Activated B cell treated with CpG ODN at 0.5 μM for 24 hours (primary cell): ENCODE measurements at regions of chrX and their contacts with region 1.

Region 1: DNA sequence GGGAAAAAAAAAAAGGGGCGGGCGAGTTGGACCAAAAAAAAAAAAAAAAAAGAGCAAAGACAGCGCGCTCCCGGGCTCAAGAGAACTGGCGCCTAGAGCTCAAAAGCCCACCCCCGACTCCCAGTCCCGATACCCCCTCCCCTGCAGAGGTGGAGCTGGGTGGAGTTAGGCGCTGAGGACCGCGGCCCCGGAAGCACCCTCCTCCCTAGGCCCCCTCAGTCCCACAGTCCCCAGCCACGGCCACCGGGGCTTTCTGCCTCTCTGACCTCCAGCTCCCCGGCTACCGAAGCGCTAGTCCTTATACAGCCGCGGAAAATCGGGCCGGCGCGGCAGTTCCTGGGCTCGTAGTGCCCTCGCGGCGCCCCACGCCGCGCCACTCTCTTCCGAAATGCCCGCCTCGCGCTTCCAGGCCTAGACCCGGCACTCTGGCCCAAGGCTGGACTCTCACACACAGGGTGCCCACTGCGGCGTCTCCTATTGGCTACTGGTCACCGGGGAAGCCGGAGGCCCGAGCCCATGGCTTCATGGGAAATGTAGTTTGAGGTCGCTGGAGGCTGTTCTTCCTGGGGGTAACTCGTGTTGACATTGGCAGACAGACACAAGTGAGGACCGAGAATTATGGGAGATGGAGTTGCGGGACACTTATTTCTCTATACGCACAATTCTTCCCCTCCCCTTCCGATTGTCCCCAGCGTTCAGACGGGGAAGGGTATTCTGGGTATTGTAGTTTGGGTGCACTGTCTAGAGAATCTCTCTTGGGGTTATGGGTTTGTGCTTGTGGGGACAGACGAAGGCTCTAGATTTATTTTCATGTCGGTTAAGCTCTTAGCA is at the start of gene ENOX2:
- DNase-seq: peak; percentile 60
- ATAC-seq: peak; percentile 94
- H3K4me3 Mint-ChIP-seq: no peak within 1 kb of the TSS
- H3K27ac Mint-ChIP-seq: peak within 1 kb of the TSS; percentile 59
- H3K4me1 Mint-ChIP-seq: peaks cover 12% of the 10 kb centered on the region
- H3K27me3 Mint-ChIP-seq: no peaks in the 10 kb centered on the region
- CTCF ChIP-seq: no peak
- total RNA-seq, gene ENOX2: 15.9 and 16.2 TPM in 2 replicates

Region 2: GRCh38 chrX:129039180-129039579 is 1863.8 kb before region 1 on chrX:
- CTCF ChIA-PET with region 1: no interaction called
- POLR2A ChIA-PET with region 1: no interaction called
- intact Hi-C with region 1: no loop called
- DNase-seq: no peak
- ATAC-seq: no peak
- H3K4me3 Mint-ChIP-seq: no peak overlapping the region
- H3K27ac Mint-ChIP-seq: no peak overlapping the region
- H3K4me1 Mint-ChIP-seq: no peaks in the 10 kb centered on the region
- H3K27me3 Mint-ChIP-seq: no peaks in the 10 kb centered on the region
- CTCF ChIP-seq: no peak

Region 3: GRCh38 chrX:130268500-130269170 is 634.4 kb before region 1 on chrX and contains the start of gene ZNF280C:
- CTCF ChIA-PET with region 1: no interaction called
- POLR2A ChIA-PET with region 1: no interaction called
- intact Hi-C with region 1: loop called (anchors 2 kb)
- DNase-seq: peak; percentile 80
- ATAC-seq: peak; percentile 93
- H3K4me3 Mint-ChIP-seq: peak within 1 kb of the TSS; percentile 86
- H3K27ac Mint-ChIP-seq: peak within 1 kb of the TSS; percentile 82
- H3K4me1 Mint-ChIP-seq: peaks cover 17% of the 10 kb centered on the region
- H3K27me3 Mint-ChIP-seq: no peaks in the 10 kb centered on the region
- CTCF ChIP-seq: no peak
- total RNA-seq, gene ZNF280C: 6.9 and 9.1 TPM in 2 replicates

Region 4: DNA sequence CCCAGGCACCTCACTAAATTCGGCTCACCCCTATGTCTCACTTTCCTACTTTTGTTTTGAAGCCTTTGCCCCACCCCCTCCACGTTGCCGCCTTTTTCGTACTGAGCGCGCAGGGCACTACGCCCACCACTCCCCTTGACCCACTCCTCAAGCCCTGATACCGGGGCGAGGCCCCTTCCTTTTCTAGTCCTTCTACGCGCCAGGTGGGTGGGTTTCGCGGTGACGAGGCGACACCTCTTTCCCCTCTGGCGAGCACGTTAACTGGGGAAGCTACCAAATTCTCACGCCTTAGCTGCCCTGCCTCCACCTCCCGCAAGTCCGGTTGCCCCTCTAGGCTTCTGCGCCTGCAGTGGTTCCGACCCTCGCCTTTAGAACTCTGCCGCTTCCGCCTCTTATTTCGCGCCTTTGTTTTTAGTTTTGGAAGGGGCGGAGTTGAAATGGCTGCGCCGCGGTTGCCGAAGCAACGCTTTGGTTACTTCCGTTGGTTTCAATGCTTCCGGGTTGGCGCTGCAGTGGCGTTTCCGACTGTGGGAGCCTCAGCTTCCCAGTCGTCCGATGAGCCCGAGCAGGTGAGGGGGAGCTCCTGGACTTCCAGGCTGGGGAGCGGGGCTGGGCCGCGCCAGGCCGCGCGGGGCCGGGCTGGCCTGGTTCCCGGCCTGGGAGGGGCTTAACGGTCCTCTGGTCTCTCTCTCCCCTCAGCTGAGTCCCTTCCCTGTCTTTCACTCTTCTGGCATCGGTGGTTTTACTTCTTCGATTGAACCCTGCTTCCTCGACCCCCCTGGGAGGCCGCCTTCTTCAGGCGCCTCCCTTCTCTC is 563.4 kb before region 1 on chrX and contains the start of gene SLC25A14:
- CTCF ChIA-PET with region 1: no interaction called
- POLR2A ChIA-PET with region 1: interaction called, 9 read pairs
- intact Hi-C with region 1: loop called (anchors 1 kb)
- DNase-seq: peak; percentile 52
- ATAC-seq: peak; percentile 89
- H3K4me3 Mint-ChIP-seq: peak within 1 kb of the TSS; percentile 93
- H3K27ac Mint-ChIP-seq: peak within 1 kb of the TSS; percentile 80
- H3K4me1 Mint-ChIP-seq: peaks cover 17% of the 10 kb centered on the region
- H3K27me3 Mint-ChIP-seq: no peaks in the 10 kb centered on the region
- CTCF ChIP-seq: no peak
- total RNA-seq, gene SLC25A14: 12.2 and 13.8 TPM in 2 replicates

Region 5: DNA sequence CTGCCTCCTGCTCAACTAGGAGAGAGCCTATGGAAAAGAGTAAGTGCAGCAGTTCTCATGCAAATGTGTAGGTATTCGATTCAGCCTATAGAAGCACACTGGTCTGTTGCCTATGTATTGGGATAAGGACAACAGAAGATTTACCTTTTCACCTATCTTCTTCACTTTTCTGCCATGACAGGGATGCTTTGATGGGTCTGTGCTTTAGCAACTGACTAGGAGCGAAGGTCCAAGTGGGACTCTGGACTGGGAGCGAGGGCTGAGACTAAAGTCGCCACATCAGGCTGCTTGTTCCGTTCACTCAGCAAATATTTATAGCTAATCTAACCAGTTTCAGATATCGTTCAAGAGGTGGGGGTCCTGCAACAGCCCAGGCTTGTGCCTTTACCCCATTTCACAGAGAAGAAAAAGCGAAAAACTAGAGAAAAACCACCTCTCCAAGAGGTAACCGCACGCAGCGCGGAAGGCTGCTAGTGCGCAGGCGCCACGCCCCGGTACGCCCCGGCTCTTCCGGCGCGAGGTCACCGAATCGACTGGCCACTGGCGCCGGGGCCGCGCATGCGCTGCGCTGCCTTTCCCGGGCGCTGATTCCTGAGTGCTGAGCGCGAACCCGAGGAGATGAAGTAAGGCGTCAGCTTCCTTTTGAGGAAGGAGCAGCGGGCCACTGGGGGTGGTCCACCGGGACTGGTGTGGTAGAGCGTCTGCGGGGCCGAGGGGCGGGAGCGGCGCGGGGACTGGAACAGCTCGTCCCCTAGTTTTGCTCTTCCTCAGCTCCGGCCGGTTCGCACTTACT is 501.4 kb before region 1 on chrX and contains the start of gene RBMX2:
- CTCF ChIA-PET with region 1: no interaction called
- POLR2A ChIA-PET with region 1: interaction called, 3 read pairs
- intact Hi-C with region 1: loop called (anchors 1 kb)
- DNase-seq: peak; percentile 60
- ATAC-seq: peak; percentile 87
- H3K4me3 Mint-ChIP-seq: peak within 1 kb of the TSS; percentile 86
- H3K27ac Mint-ChIP-seq: peak within 1 kb of the TSS; percentile 91
- H3K4me1 Mint-ChIP-seq: peaks cover 19% of the 10 kb centered on the region
- H3K27me3 Mint-ChIP-seq: peaks cover 7% of the 10 kb centered on the region
- CTCF ChIP-seq: no peak
- total RNA-seq, gene RBMX2: 21.1 and 23.6 TPM in 2 replicates

Region 6: GRCh38 chrX:130552444-130553073 is 350.4 kb before region 1 on chrX:
- CTCF ChIA-PET with region 1: no interaction called
- POLR2A ChIA-PET with region 1: no interaction called
- intact Hi-C with region 1: loop called (anchors 5 kb)
- DNase-seq: no peak
- ATAC-seq: peak; percentile 90
- H3K4me3 Mint-ChIP-seq: peak overlapping the region; percentile 38
- H3K27ac Mint-ChIP-seq: peak overlapping the region; percentile 63
- H3K4me1 Mint-ChIP-seq: peaks cover 37% of the 10 kb centered on the region
- H3K27me3 Mint-ChIP-seq: no peaks in the 10 kb centered on the region
- CTCF ChIP-seq: no peak

Region 7: DNA sequence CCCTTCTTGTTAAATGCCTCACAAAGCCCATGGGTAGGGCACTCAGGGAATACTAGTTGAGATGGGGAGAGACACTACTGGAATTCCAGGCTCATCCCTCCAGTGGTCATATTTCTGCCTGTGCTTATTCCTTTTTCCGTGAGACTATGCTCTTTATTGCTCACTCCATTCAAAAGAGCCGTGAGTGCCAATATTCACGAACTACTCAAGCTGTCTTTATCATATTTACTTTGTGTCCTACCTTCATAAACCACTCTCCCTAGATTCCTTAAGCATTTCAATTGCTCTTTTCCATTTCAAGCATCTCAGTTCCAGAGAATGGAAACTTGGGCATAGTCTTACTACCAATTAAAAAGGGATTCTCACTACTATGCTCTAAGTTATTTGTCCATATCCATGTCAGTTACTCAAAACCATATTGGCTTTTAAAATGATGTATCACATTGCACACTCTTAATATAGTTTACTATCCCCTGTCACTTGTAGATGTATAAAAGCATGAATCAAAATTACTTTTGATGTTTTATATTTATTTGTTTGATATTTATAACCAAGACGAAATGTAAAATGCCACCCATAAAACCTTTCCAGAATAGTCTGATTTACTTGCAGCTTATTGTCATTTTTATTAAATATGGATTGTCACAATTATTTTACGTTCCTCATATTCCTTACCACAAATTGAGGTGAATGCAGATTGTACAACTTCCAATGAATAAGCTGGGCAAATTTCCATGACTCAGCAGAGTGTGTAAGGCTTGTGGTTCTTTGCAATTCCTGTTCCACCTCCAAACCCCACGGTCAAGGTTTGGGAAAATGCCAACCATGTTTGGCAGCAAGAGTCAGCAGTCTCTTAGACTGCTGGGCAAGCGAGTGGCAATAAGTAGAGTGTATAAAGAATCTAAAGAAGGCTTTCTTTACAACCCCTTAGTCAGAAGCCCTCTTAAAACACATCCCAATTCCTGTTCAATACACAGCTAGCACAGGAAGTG is 24.4 kb before region 1 on chrX:
- CTCF ChIA-PET with region 1: no interaction called
- POLR2A ChIA-PET with region 1: no interaction called
- intact Hi-C with region 1: no loop called
- DNase-seq: no peak
- ATAC-seq: no peak
- H3K4me3 Mint-ChIP-seq: no peak overlapping the region
- H3K27ac Mint-ChIP-seq: no peak overlapping the region
- H3K4me1 Mint-ChIP-seq: no peaks in the 10 kb centered on the region
- H3K27me3 Mint-ChIP-seq: no peaks in the 10 kb centered on the region
- CTCF ChIP-seq: no peak

Region 8: GRCh38 chrX:131812836-131813825 is 910.1 kb after region 1 on chrX:
- CTCF ChIA-PET with region 1: no interaction called
- POLR2A ChIA-PET with region 1: no interaction called
- intact Hi-C with region 1: loop called (anchors 10 kb)
- DNase-seq: peak; percentile 46
- ATAC-seq: peak; percentile 79
- H3K4me3 Mint-ChIP-seq: peak overlapping the region; percentile 80
- H3K27ac Mint-ChIP-seq: peak overlapping the region; percentile 91
- H3K4me1 Mint-ChIP-seq: peaks cover 26% of the 10 kb centered on the region
- H3K27me3 Mint-ChIP-seq: no peaks in the 10 kb centered on the region
- CTCF ChIP-seq: no peak

Region 9: DNA sequence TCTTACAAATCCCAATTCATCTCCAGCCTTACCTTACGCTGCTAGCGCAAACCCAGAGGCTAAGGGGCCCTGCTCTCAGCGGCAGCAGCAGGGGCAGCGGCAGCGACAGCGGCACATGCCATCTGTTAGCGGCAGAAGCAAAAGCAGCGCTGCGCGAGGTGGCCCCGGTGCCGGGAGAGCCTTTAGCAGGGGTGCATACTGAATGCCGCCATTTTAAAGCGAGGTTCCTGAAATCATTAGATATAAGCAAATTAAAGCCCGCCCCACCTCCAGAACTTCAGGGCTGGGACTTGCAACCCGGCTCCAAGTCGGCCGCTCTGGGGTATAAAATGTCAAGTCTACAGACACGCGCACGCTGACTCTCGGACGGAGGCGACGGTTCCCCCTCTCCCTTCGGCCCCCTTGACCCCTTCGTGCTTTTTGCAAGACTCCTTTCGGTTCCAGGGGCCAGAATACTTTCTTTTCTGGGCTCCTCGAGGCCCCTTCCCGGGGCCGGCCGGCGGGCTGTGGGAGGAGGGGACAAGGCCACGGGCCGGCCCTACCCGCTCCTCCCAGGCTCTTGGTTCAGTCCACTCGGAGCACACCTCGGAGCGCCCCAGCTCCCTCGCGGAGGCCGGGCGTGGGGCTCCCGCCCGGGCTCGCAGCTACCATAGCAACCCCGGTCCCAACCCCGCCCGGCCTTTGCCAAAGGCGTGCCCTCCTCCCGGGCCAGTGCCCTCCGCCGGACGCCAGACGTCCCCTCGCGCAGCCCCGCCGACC is 1586.0 kb after region 1 on chrX and contains the start of gene MBNL3:
- CTCF ChIA-PET with region 1: no interaction called
- POLR2A ChIA-PET with region 1: no interaction called
- intact Hi-C with region 1: loop called (anchors 5 kb)
- DNase-seq: peak; percentile 61
- ATAC-seq: peak; percentile 63
- H3K4me3 Mint-ChIP-seq: peak within 1 kb of the TSS; percentile 98
- H3K27ac Mint-ChIP-seq: peak within 1 kb of the TSS; percentile 99
- H3K4me1 Mint-ChIP-seq: peaks cover 60% of the 10 kb centered on the region
- H3K27me3 Mint-ChIP-seq: no peaks in the 10 kb centered on the region
- CTCF ChIP-seq: no peak
- total RNA-seq, gene MBNL3: 41.0 and 47.0 TPM in 2 replicates